Adrenal gland (tissue), 19 donors: ENCODE measurements at regions of chr6 and their contacts with region 1.

Region 1: DNA sequence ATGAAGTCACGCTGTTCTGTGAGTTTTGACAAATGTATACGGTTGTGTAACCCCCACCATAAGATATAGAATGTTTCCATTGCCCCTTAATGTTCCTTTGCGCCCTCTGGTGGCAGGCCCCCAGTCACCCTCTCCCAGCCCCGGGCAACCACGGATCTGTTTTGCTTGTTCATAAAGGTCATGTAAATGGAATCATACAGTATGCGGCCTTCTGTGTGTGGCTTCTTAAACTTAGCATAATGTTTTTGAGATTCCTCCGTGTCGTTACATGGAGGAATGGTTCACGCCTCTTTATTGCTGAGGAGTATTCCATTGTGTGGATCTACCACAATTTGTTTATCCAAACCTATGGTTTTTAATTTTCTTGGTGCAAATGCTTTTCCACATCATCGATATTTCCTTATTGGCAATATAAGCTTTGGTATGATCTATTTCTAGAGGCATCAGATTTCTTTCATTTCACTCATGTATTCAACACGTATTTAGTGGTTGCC is 28.4 kb downstream of the LYRM2 start:
- DNase-seq: peak; percentile 55 to 77 (median 66)
- H3K4me3 ChIP-seq: no peak overlapping the region
- H3K27ac ChIP-seq: no peak overlapping the region
- H3K4me1 ChIP-seq: no peaks in the 10 kb centered on the region
- H3K27me3 ChIP-seq: no peaks in the 10 kb centered on the region
- CTCF ChIP-seq: peak; percentile 65 to 79 (median 75)
- POLR2A ChIP-seq: no peak

Region 2: DNA sequence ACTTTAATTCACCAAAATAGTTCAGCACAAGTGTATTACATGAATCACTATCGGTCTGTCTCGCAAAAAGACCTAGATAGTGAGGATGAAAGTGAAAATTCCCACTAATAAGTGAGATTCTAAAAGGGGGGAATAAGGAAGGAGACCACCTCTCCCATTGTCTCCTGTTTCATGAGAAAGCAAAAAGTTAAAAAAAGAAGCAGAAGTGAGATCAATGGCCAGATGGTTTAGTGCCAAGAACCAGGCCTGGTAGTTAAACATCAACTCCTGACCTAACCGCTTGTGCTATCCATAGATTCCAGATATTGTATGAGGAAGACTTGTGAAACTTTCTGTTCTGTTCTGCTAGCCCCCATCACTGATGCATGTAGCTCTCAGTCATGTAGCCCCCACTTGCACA is 939.8 kb before region 1 on chr6:
- intact Hi-C with region 1: no loop called
- DNase-seq: no peak
- H3K4me3 ChIP-seq: no peak overlapping the region
- H3K27ac ChIP-seq: no peak overlapping the region
- H3K4me1 ChIP-seq: no peaks in the 10 kb centered on the region
- H3K27me3 ChIP-seq: no peaks in the 10 kb centered on the region
- CTCF ChIP-seq: no peak
- POLR2A ChIP-seq: no peak

Region 3: GRCh38 chr6:88881451-88881850 is 728.7 kb before region 1 on chr6:
- intact Hi-C with region 1: no loop called
- DNase-seq: no peak
- H3K4me3 ChIP-seq: no peak overlapping the region
- H3K27ac ChIP-seq: no peak overlapping the region
- H3K4me1 ChIP-seq: no peaks in the 10 kb centered on the region
- H3K27me3 ChIP-seq: no peaks in the 10 kb centered on the region
- CTCF ChIP-seq: no peak
- POLR2A ChIP-seq: no peak

Region 4: DNA sequence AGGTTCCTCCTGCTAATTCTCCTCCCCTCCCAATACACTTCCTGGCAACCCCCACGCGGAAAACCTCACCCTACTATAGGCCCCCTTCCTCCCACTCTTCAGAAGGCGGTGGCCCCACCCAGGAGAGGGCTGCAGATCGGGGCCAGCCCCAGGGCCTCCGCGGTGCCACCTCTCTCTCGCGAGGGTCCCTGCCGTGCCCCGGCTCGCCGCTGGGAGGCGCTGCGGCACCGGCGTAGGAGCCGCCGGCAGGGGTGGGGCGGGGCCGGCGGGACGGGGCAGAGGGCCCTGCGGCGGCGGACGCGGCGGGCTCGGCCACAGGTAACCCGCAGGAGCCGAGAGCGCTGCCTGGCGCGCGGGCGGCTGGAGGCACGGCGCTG is 177.3 kb before region 1 on chr6 and contains the start of gene ANKRD6:
- intact Hi-C with region 1: loop called (anchors 2 to 5 kb)
- DNase-seq: peak; percentile 48 to 84 (median 78)
- H3K4me3 ChIP-seq: peak within 1 kb of the TSS; percentile 56 to 75 (median 64)
- H3K27ac ChIP-seq: no peak within 1 kb of the TSS
- H3K4me1 ChIP-seq: peaks cover 2 to 6% of the 10 kb centered on the region in 2 donors
- H3K27me3 ChIP-seq: no peaks in the 10 kb centered on the region
- CTCF ChIP-seq: peak; percentile 41 to 97 (median 78)
- POLR2A ChIP-seq: peak in 1 of 2 donors; percentile 10
- total RNA-seq, gene ANKRD6: 4.8 to 16.6 (median 8.0) TPM

Region 5: GRCh38 chr6:89787660-89788328 is 177.6 kb after region 1 on chr6:
- intact Hi-C with region 1: no loop called
- DNase-seq: no peak
- H3K4me3 ChIP-seq: no peak overlapping the region
- H3K27ac ChIP-seq: no peak overlapping the region
- H3K4me1 ChIP-seq: no peaks in the 10 kb centered on the region
- H3K27me3 ChIP-seq: no peaks in the 10 kb centered on the region
- CTCF ChIP-seq: no peak
- POLR2A ChIP-seq: no peak

Region 6: GRCh38 chr6:89862273-89862672 is 252.1 kb after region 1 on chr6:
- intact Hi-C with region 1: no loop called
- DNase-seq: no peak
- H3K4me3 ChIP-seq: no peak overlapping the region
- H3K27ac ChIP-seq: no peak overlapping the region
- H3K4me1 ChIP-seq: no peaks in the 10 kb centered on the region
- H3K27me3 ChIP-seq: no peaks in the 10 kb centered on the region
- CTCF ChIP-seq: no peak
- POLR2A ChIP-seq: no peak